ENCODE measurements at regions of chr4 and their contacts with region 1.

Region 1: DNA sequence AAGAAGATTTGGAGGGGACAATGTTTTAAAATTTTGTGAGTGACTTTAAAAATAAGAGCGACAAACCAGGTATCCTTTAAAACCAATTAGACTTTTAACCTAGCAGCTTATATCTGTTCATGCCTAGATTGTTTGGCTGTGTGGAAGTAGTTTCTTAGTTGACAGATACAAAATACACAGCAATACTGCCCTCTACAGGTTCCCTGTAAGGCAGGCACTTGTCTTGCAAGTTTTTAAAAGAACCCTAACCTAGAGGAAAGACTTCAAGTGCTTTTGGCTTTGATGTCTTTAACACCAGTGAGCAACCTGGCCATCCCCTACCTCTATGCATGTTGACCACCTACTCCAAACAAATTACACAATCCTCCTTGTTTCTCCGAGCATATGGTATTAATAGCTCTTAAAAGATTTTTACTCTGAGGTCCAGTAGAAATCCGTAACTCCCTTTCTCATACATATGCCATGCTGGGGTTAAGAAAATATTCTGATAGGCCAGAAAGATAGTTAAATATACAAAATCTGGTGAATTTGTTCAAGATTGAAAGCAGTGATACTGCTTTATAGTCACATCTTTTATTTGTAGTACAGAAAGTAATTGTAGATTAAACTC is 273.0 kb downstream of the ARHGAP24 start:
- DNase-seq: peak in 3 of 5 donors; percentile 25 to 37 (median 33)
- ATAC-seq: peak; percentile 81 to 85 (median 83)
- H3K4me3 ChIP-seq: no peak overlapping the region
- H3K27ac ChIP-seq: peak overlapping the region in 1 of 12 donors; percentile 3
- H3K4me1 ChIP-seq: peaks cover 0 to 45% (median 6%) of the 10 kb centered on the region in 12 donors
- H3K27me3 ChIP-seq: no peaks in the 10 kb centered on the region
- CTCF ChIP-seq: peak; percentile 80 to 93 (median 87)
- POLR2A ChIP-seq: no peak

Region 2: GRCh38 chr4:85142451-85142850 is 605.5 kb before region 1 on chr4:
- intact Hi-C with region 1: loop called in 8 of 10 experiments (anchors 1 to 5 kb)
- DNase-seq: no peak
- ATAC-seq: peak in 1 of 4 donors; percentile 18
- H3K4me3 ChIP-seq: no peak overlapping the region
- H3K27ac ChIP-seq: peak overlapping the region in 4 of 12 donors; percentile 8 to 49 (median 20)
- H3K4me1 ChIP-seq: no peaks in the 10 kb centered on the region
- H3K27me3 ChIP-seq: no peaks in the 10 kb centered on the region
- CTCF ChIP-seq: no peak
- POLR2A ChIP-seq: no peak

Region 3: DNA sequence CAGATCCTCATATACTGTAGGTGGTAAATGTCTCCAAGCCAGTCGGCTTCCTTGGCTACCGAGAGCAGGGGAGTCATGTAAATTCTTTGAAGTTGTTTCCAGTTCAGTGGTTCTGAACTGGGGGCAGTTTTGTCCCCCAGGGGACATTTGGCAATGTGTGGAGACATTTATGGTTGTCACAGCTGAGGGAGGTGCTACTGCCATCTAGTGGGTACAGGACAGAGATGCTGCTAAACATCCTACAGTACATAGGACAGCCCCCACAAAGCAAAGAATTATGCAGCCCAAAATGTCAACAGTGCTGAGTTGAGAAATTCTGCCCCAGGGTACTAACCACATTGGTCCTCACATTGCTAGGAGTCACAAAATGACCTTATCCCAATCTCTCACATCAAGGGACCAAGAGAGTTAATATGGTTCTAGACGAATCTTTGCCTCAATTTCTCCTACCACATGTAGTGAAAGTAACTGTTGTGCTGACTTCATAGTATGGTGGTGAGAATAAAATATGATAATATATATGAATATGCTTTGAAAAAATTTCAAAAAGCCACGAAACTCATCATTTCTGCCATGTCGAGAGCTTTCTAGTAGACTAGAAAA is 377.5 kb before region 1 on chr4:
- intact Hi-C with region 1: loop called in 5 of 10 experiments (anchors 2 to 10 kb)
- DNase-seq: peak in 4 of 5 donors; percentile 22 to 32 (median 24)
- ATAC-seq: peak; percentile 22 to 72 (median 67)
- H3K4me3 ChIP-seq: no peak overlapping the region
- H3K27ac ChIP-seq: no peak overlapping the region
- H3K4me1 ChIP-seq: peaks cover 0 to 18% (median 5%) of the 10 kb centered on the region in 12 donors
- H3K27me3 ChIP-seq: no peaks in the 10 kb centered on the region
- CTCF ChIP-seq: peak; percentile 59 to 81 (median 66)
- POLR2A ChIP-seq: no peak

Region 4: DNA sequence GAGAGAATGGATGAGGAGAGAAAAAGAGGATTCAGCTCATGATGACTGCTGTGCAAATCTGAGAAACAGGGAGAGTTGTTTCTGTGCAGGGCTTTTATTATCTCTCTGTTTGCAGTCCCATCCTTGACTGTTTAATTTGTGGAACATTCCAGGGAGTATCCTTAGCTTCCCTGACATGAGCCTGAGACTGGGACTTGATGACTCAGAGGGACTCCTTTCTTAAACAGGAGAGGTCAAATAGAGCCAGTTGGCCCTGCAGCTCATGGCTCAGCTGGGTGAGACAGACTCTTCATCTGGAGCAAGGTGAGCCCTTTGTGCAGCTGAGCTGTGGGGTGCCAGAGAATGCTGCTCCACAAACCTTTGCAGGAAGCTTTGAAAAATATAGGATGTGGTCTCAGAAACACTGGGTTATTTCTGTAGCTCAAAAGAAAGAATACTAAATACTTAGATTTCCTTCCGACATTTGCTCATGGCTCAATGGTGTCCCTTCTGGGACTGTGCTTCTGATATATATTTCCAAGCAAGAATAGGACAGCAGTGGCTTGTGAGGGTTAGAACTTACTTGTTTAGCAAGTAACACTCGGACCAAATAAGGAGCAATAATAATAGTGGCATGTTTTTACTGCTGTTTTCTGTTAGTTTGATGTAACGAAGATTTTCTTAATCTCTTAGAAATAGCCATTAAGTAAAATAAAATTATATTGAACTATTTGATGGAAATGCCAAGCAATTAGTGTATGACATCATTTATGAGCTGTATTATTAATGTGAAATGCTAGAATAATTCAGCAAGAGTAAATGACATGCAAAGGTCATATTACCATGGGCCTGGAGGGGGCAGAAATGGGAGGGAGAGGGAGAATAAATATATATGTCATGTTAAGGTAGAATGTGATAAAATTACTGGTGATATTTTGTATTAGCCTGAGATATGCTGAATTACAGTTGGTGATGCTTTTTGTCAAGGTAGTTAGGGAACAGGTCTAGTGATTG is 258.4 kb before region 1 on chr4:
- intact Hi-C with region 1: loop called in 1 of 10 experiments (anchors 10 kb)
- DNase-seq: peak in 1 of 5 donors; percentile 35
- ATAC-seq: peak; percentile 54 to 86 (median 60)
- H3K4me3 ChIP-seq: no peak overlapping the region
- H3K27ac ChIP-seq: no peak overlapping the region
- H3K4me1 ChIP-seq: peaks cover 0 to 48% (median 14%) of the 10 kb centered on the region in 12 donors
- H3K27me3 ChIP-seq: no peaks in the 10 kb centered on the region
- CTCF ChIP-seq: no peak
- POLR2A ChIP-seq: no peak

Region 5: GRCh38 chr4:85603437-85604336 is 144.3 kb before region 1 on chr4:
- intact Hi-C with region 1: loop called in 3 of 10 experiments (anchors 5 to 10 kb)
- DNase-seq: no peak
- ATAC-seq: peak; percentile 27 to 82 (median 47)
- H3K4me3 ChIP-seq: no peak overlapping the region
- H3K27ac ChIP-seq: no peak overlapping the region
- H3K4me1 ChIP-seq: peaks cover 0 to 19% (median 8%) of the 10 kb centered on the region in 12 donors
- H3K27me3 ChIP-seq: no peaks in the 10 kb centered on the region
- CTCF ChIP-seq: no peak
- POLR2A ChIP-seq: no peak